HEK293 (cell line): ENCODE measurements at regions of chr6 and their contacts with region 1.

Region 1: GRCh38 chr6:106556368-106556960 is 72.8 kb downstream of the RTN4IP1 start:
- H3K4me3 ChIP-seq: no peak overlapping the region
- H3K27ac ChIP-seq: no peak overlapping the region
- H3K4me1 ChIP-seq: no peaks in the 10 kb centered on the region
- CTCF ChIP-seq: no peak

Region 2: DNA sequence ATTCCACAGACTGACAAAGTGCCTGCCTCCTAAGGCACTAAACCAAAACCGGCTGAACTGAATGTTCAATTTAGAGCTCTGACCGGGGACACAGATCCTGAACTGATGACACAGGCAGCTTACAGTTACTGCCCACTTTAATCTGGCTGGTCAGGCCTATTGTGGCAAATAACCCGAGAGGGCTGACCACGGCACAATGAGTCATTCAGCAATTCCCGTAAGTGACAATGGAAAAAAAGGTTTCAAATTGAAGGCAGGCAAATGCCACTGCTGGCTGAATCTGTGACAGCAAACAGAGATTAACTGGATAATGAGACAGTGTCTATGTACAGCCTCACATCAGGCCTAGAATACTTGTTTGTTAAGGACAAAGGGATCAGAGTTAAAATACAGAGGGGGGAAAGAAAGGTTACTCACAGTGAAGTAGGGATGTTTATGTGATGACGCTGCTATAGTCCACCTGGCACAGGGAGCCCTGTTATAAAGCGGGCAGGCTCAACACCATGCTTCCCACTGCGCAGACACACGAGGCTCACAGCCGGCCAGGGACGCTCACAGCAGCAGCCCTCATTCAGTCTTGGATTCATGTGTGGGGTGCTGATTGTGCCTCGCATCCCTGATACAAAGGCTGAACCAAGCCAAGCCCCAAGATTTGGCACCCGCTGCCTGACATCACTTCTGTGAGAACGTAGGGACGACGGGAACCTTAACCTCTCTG is 18.4 kb after region 1 on chr6:
- CTCF ChIA-PET with region 1: interaction called, 10 read pairs
- POLR2A ChIA-PET with region 1: no interaction called
- H3K4me3 ChIP-seq: no peak overlapping the region
- H3K27ac ChIP-seq: no peak overlapping the region
- H3K4me1 ChIP-seq: no peaks in the 10 kb centered on the region
- CTCF ChIP-seq: no peak